Activated T-helper 1 cell treated with anti-CD3 and anti-CD28 coated beads, Interleukin-12 subunit alpha, Interleukin-12 subunit beta, Interleukin-2, Interleukin-4 antibody, amounts not matched to agents 30 ng/mL and 10 ng/mL and 1 ng/mL, durations not matched to agents 14 hours and 24 hours and 36 hours (primary cell): ENCODE measurements at regions of chr5 and their contacts with region 1.

Region 1: GRCh38 chr5:32499261-32499660 is 54.7 kb upstream of the ZFR start:
- DNase-seq: no peak
- H3K4me3 Mint-ChIP-seq: no peak overlapping the region
- H3K27ac Mint-ChIP-seq: no peak overlapping the region
- H3K4me1 Mint-ChIP-seq: peaks cover 30% of the 10 kb centered on the region
- H3K27me3 Mint-ChIP-seq: peaks cover 3% of the 10 kb centered on the region

Region 2: DNA sequence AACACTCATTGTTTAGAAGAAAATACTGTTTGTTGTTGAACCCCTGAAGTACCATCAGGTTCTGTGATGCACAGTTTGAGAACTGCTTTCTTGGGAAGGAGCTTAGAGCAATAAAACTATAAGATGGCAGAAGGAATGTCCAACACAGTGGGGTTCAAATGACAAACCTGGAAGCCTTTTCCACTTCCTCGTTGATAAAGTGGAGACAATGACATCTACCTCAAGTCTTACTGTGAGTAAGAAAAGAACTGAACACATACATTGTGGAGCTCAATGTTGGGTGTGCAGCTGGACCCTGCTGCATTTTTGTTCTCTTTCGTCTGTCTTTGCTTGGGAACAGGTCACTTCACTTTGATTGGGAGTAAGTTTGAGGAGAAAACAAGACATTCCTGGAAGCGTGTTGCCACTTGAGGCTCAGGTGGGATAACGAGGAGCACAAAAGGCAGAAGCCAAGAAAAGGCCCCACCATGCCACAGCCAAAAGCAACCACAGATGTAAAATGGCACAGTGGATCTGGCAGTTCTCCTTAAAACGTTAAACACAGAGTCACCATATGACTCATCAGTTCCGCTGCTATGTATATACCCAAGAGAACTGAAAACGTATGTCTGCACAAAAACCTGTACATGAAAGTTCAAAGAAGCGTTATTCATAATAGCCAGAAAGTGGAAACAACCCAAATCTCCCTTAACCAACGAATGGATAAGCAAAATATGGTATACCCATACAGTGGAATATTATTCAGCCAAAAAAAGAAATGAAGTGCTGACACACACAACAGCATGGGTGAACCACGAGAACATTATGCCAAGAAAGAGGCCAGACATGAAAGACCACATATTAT is 43.2 kb after region 1 on chr5:
- intact Hi-C with region 1: loop called (anchors 1 kb)
- DNase-seq: peak; percentile 59
- H3K4me3 Mint-ChIP-seq: peak overlapping the region; percentile 59
- H3K27ac Mint-ChIP-seq: peak overlapping the region; percentile 92
- H3K4me1 Mint-ChIP-seq: peaks cover 68% of the 10 kb centered on the region
- H3K27me3 Mint-ChIP-seq: no peaks in the 10 kb centered on the region